ENCODE measurements at regions of chr3 and their contacts with region 1.

Region 1: GRCh38 chr3:183895296-183895695 is 10.6 kb upstream of the PARL start:
- DNase-seq: peak; percentile 48 to 60 (median 57)
- H3K4me3 ChIP-seq: no peak overlapping the region
- H3K4me3 Mint-ChIP-seq: no peak overlapping the region
- H3K27ac ChIP-seq: no peak overlapping the region
- H3K27ac Mint-ChIP-seq: no peak overlapping the region
- H3K4me1 ChIP-seq: no peaks in the 10 kb centered on the region
- H3K4me1 Mint-ChIP-seq: peaks cover 0 to 3% (median 1%) of the 10 kb centered on the region in 4 donors
- H3K27me3 ChIP-seq: no peaks in the 10 kb centered on the region
- H3K27me3 Mint-ChIP-seq: peaks cover 17 to 37% of the 10 kb centered on the region in 2 donors

Region 2: GRCh38 chr3:183357564-183358079 is 537.7 kb before region 1 on chr3:
- CTCF ChIA-PET with region 1: no interaction called
- POLR2A ChIA-PET with region 1: no interaction called
- intact Hi-C with region 1: no loop called
- DNase-seq: no peak
- H3K4me3 ChIP-seq: no peak overlapping the region
- H3K4me3 Mint-ChIP-seq: no peak overlapping the region
- H3K27ac ChIP-seq: no peak overlapping the region
- H3K27ac Mint-ChIP-seq: no peak overlapping the region
- H3K4me1 ChIP-seq: no peaks in the 10 kb centered on the region
- H3K4me1 Mint-ChIP-seq: peaks cover 0 to 3% (median 0%) of the 10 kb centered on the region in 4 donors
- H3K27me3 ChIP-seq: no peaks in the 10 kb centered on the region
- H3K27me3 Mint-ChIP-seq: peaks cover 0 to 1% of the 10 kb centered on the region in 2 donors

Region 3: DNA sequence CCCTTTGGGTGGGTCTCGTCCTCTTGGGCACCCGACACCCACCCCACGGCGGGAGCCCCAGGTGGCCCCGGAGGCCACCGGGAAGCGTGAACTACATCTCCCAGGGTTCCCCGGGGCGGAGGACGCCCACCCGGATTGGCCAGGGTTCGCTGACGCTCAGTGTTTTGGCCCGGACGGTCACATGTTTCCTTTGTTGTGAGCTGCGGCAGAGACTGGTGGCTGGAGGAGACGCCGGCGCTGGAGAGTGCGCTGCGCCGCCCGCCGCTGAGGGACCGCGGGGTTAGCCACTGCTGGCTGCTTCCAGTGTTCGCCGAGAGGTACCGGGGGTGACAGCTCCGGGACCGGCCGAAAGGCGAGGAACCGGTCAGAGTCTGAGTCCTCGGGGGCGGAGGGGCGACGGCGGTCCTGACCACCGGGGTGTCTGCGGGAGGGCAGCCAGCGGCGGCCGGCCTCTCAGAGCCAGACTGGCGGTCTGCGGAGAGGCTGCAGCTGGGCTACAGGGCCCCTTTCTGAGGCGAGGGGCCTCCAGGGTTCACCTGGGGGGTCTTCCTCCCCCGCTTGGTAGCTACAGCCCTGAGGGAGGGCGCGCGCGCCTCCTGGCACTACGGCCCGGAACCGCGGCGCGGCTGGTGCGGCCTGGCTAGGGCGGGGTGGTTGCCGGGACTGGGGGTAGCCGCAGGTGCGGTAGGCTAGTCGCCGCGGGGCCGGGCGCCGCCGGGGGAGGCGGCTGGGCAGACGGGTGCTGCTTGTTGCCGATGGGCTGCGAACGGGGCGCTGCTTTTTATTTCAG is 259.7 kb before region 1 on chr3 and contains the start of gene KLHL24:
- CTCF ChIA-PET with region 1: no interaction called
- POLR2A ChIA-PET with region 1: no interaction called
- intact Hi-C with region 1: no loop called
- DNase-seq: peak; percentile 87 to 92 (median 88)
- H3K4me3 ChIP-seq: peak within 1 kb of the TSS; percentile 33 to 97
- H3K4me3 Mint-ChIP-seq: peak within 1 kb of the TSS; percentile 93 to 97 (median 94)
- H3K27ac ChIP-seq: peak within 1 kb of the TSS; percentile 86
- H3K27ac Mint-ChIP-seq: peak within 1 kb of the TSS; percentile 93 to 98 (median 97)
- H3K4me1 ChIP-seq: peaks cover 28% of the 10 kb centered on the region
- H3K4me1 Mint-ChIP-seq: peaks cover 10 to 43% (median 29%) of the 10 kb centered on the region in 4 donors
- H3K27me3 ChIP-seq: no peaks in the 10 kb centered on the region
- H3K27me3 Mint-ChIP-seq: no peaks in the 10 kb centered on the region
- total RNA-seq, gene KLHL24: 107 to 108 TPM

Region 4: GRCh38 chr3:183884427-183885296 is 10.6 kb before region 1 on chr3 and contains the start of gene PARL:
- CTCF ChIA-PET with region 1: interaction called, 22 read pairs
- POLR2A ChIA-PET with region 1: interaction called, 3 read pairs
- intact Hi-C with region 1: no loop called
- DNase-seq: peak; percentile 93 to 95 (median 94)
- H3K4me3 ChIP-seq: peak within 1 kb of the TSS; percentile 85 to 95
- H3K4me3 Mint-ChIP-seq: peak within 1 kb of the TSS; percentile 92 to 98 (median 95)
- H3K27ac ChIP-seq: peak within 1 kb of the TSS; percentile 74
- H3K27ac Mint-ChIP-seq: peak within 1 kb of the TSS; percentile 88 to 96 (median 93)
- H3K4me1 ChIP-seq: peaks cover 28% of the 10 kb centered on the region
- H3K4me1 Mint-ChIP-seq: peaks cover 24 to 50% (median 34%) of the 10 kb centered on the region in 4 donors
- H3K27me3 ChIP-seq: no peaks in the 10 kb centered on the region
- H3K27me3 Mint-ChIP-seq: no peaks in the 10 kb centered on the region
- total RNA-seq, gene PARL: 46.9 to 50.2 TPM

Region 5: GRCh38 chr3:183924956-183925355 is 29.7 kb after region 1 on chr3:
- CTCF ChIA-PET with region 1: no interaction called
- POLR2A ChIA-PET with region 1: no interaction called
- intact Hi-C with region 1: no loop called
- DNase-seq: no peak
- H3K4me3 ChIP-seq: no peak overlapping the region
- H3K4me3 Mint-ChIP-seq: no peak overlapping the region
- H3K27ac ChIP-seq: no peak overlapping the region
- H3K27ac Mint-ChIP-seq: no peak overlapping the region
- H3K4me1 ChIP-seq: no peaks in the 10 kb centered on the region
- H3K4me1 Mint-ChIP-seq: no peaks in the 10 kb centered on the region
- H3K27me3 ChIP-seq: no peaks in the 10 kb centered on the region
- H3K27me3 Mint-ChIP-seq: no peaks in the 10 kb centered on the region

Region 6: DNA sequence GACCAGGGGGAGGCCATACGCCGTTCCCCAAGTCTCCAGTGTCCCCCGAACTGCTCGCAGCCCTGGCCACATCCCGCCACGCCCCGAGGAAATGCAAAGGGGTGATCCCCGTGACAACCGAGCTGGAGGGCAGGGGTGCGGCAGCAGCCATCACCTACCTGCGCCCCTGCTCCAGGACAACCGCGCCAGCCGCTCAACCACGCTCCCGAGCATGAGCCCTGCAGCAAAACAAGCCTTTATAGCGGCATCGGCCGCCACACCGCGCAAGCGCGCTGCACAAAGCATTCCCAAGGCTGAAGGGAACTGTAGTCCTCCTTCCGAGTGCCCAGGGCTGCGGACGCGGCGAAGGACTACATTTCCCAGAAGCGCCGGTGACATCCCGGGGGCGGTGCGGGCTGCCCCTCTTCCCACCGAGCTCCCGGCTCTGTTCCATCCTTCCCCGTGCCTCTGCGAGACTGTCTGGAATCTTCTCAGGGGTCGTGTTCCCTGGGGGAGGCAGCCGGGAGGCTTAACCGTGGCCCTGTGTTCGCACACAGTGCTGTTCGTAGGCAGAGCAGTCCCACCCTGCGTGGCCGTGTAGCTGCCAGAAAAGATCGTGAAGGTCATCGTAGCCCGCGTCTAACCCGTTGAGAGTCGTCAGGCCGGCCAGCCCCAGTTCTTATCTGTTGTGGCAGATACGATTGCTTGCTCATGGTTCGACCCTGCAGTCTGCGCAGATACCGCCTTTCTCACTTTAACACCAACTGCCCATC is 122.6 kb after region 1 on chr3 and contains the start of gene ABCC5:
- CTCF ChIA-PET with region 1: interaction called, 36 read pairs
- POLR2A ChIA-PET with region 1: interaction called, 3 read pairs
- intact Hi-C with region 1: loop called (anchors 1 kb)
- DNase-seq: peak; percentile 79 to 84 (median 82)
- H3K4me3 ChIP-seq: peak within 1 kb of the TSS; percentile 93 to 96
- H3K4me3 Mint-ChIP-seq: peak within 1 kb of the TSS; percentile 98 to 100 (median 100)
- H3K27ac ChIP-seq: peak within 1 kb of the TSS; percentile 43
- H3K27ac Mint-ChIP-seq: peak within 1 kb of the TSS; percentile 90 to 96 (median 93)
- H3K4me1 ChIP-seq: peaks cover 17% of the 10 kb centered on the region
- H3K4me1 Mint-ChIP-seq: peaks cover 16 to 35% (median 24%) of the 10 kb centered on the region in 4 donors
- H3K27me3 ChIP-seq: no peaks in the 10 kb centered on the region
- H3K27me3 Mint-ChIP-seq: peaks cover 6 to 8% of the 10 kb centered on the region in 2 donors
- total RNA-seq, gene ABCC5: 42.3 to 42.6 TPM

Region 7: GRCh38 chr3:184289426-184289938 is 394.2 kb after region 1 on chr3:
- CTCF ChIA-PET with region 1: interaction called, 6 read pairs
- POLR2A ChIA-PET with region 1: no interaction called
- intact Hi-C with region 1: loop called (anchors 1 kb)
- DNase-seq: peak; percentile 40 to 57 (median 48)
- H3K4me3 ChIP-seq: no peak overlapping the region
- H3K4me3 Mint-ChIP-seq: no peak overlapping the region
- H3K27ac ChIP-seq: no peak overlapping the region
- H3K27ac Mint-ChIP-seq: peak overlapping the region in 1 of 7 donors; percentile 57
- H3K4me1 ChIP-seq: no peaks in the 10 kb centered on the region
- H3K4me1 Mint-ChIP-seq: peaks cover 0 to 2% (median 0%) of the 10 kb centered on the region in 4 donors
- H3K27me3 ChIP-seq: peaks cover 3% of the 10 kb centered on the region
- H3K27me3 Mint-ChIP-seq: peaks cover 5 to 16% of the 10 kb centered on the region in 2 donors

Region 8: GRCh38 chr3:184371570-184372018 is 476.3 kb after region 1 on chr3:
- CTCF ChIA-PET with region 1: no interaction called
- POLR2A ChIA-PET with region 1: no interaction called
- intact Hi-C with region 1: loop called (anchors 1 kb)
- DNase-seq: peak; percentile 47 to 62 (median 58)
- H3K4me3 ChIP-seq: no peak overlapping the region
- H3K4me3 Mint-ChIP-seq: no peak overlapping the region
- H3K27ac ChIP-seq: no peak overlapping the region
- H3K27ac Mint-ChIP-seq: no peak overlapping the region
- H3K4me1 ChIP-seq: no peaks in the 10 kb centered on the region
- H3K4me1 Mint-ChIP-seq: peaks cover 6 to 18% (median 10%) of the 10 kb centered on the region in 4 donors
- H3K27me3 ChIP-seq: no peaks in the 10 kb centered on the region
- H3K27me3 Mint-ChIP-seq: peaks cover 9 to 11% of the 10 kb centered on the region in 2 donors